RWPE1 (cell line): ENCODE measurements at regions of chr9 and their contacts with region 1.

Region 1: GRCh38 chr9:106886111-106887046 is 23.4 kb downstream of the ZNF462 start:
- DNase-seq: peak; percentile 86
- H3K27ac ChIP-seq: peak overlapping the region; percentile 16; the same call in 1 of the 2 replicates
- CTCF ChIP-seq: no peak

Region 2: DNA sequence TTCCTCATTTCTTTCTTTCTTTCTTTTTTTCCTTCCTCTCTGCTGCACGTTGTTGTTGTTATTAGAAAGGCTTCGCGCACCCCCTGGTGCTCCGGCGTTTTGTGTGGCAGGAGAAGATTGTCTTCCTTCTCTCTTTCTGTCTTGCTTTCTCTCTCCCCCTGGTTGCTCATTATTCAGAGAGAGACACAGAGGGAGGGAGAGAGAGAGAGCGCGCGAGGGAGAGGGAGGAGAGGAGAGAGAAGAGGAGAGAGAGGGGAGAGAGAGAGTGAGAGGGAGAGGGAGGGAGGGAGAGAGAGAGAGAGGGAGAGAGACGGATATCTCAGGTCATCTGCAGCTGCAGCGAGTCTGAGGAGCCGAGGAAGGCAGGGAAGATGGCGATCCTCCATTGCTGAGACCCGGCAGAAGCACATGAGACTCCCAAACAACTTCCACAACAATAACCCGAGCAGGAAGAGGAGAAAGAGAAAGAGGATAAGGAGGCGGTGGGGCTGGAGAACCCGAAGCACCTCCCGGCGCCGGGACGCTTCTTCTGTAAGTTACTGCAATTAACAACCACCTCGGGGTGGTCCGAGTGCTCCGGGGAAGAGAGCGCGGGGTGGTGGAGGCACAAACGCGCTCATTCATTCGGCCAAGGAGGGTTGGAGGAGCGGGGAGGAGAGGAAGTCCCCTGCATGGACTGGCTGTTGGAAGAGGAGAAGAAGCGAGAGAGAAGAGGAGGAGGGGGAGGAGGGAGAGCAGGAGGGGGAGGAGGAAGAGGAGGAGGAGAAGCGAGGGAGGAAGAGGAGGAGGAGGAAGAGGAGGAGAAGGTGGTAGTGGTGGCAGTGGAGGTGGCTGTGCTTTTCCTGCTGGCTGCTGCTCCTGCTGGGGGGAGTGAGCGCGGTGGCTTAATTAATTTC is 23.3 kb before region 1 on chr9 and contains the start of gene ZNF462:
- CTCF ChIA-PET with region 1: no interaction called
- POLR2A ChIA-PET with region 1: interaction called, 24 read pairs
- DNase-seq: peak; percentile 63
- H3K27ac ChIP-seq: peak within 1 kb of the TSS; percentile 88
- CTCF ChIP-seq: peak; percentile 59

Region 3: DNA sequence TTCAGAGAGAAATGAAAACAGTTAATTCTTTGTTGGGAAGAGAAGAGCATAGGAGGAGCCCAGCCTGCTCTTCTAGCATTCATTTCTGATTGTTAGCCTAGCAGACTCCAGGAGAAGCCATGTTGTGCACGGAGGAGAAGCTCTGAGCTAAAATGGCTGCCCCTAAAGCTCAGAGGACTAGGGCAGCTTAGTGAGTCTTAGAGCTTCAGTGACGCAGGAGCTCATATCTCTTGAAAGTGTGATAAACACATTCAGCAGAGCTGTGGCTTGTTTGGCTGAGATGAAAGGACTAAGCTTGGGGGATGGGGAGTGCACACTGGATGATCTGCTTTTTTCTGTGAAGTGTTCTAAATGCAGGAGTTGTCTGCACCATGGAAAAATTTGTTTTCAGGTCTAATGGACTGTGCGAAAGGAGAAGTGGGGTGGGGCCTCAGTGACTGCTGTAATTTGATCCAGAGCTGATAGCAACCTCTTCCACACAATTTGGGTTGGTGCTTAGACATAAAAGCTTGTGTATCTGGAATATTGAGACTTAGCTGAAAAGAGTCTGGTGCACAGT is 35.0 kb after region 1 on chr9:
- CTCF ChIA-PET with region 1: no interaction called
- POLR2A ChIA-PET with region 1: no interaction called
- DNase-seq: no peak
- H3K27ac ChIP-seq: no peak overlapping the region; the same call in 1 of the 2 replicates
- CTCF ChIP-seq: no peak